ENCODE measurements at regions of chr14 and their contacts with region 1.

Region 1: DNA sequence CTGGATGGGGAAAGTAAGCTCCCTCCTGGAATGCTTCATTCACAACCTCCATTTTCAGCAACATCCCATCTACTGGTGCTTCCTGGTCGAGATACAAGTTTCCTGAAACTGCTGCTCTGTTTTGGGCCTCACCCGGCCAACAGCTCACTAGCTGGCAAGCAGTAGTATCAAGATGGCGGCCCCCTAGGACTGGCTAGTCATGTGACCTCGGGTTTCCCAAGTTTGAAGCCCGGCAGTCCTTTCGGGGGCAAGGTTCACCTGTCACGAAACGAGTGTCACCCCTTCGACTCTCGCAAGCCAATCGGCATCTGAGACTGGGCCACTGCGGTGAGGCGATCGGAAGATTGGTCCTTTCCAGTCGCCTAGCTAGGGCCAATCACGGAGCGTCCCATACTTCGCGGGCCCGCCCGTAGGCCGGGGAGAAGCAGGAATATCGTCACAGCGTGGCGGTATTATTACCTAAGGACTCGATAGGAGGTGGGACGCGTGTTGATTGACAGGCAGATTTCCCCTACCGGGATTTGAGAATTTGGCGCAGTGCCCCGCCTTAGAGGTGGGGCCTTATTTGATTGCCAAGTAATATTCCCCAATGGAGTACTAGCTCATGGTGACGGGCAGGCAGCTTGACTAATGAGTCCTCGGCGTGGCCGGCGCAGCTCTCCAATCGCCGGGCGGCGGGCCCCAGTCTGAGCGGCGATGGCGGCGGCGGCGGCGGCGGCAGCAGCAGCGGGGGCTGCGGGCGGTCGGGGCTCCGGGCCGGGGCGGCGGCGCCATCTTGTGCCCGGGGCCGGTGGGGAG is at the start of gene PABPN1:
- DNase-seq: peak; percentile 95 to 98
- H3K4me3 ChIP-seq: peak within 1 kb of the TSS; percentile 98
- H3K27ac ChIP-seq: peak within 1 kb of the TSS; percentile 68
- H3K4me1 ChIP-seq: peaks cover 15% of the 10 kb centered on the region
- H3K27me3 ChIP-seq: no peaks in the 10 kb centered on the region
- CTCF ChIP-seq: no peak
- total RNA-seq, gene PABPN1: 107 and 142 TPM in 2 replicates

Region 2: DNA sequence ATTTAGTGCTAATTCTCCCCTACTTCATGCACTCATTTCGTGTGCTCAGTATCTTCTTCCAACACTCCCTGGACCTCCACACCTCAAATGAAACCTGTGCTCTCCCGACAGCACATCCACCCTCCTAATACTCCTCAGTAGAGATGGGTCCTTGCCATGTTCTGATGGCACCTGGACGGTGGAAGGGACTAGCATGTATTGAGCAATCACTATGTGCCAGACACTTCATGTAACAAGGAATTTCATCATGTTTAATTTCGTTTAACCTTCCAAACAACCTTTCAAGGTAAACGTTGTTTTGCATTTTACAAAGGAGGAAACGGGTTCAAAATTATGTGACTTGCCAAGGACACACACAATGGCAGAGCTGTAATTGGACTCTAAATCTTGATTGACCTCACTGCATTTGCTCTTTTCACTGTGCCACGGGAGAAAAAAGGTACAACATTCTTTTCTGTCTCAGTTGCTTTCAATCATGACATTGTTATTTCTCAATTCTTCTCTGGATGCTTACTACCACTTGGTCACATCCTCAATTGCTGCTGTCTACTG is 125.3 kb before region 1 on chr14:
- CTCF ChIA-PET with region 1: no interaction called
- POLR2A ChIA-PET with region 1: interaction called, 11 read pairs
- intact Hi-C with region 1: no loop called
- DNase-seq: no peak
- H3K4me3 ChIP-seq: no peak overlapping the region
- H3K27ac ChIP-seq: no peak overlapping the region
- H3K4me1 ChIP-seq: no peaks in the 10 kb centered on the region
- H3K27me3 ChIP-seq: no peaks in the 10 kb centered on the region
- CTCF ChIP-seq: no peak

Region 3: GRCh38 chr14:23306410-23307145 is 14.4 kb before region 1 on chr14 and contains the start of gene BCL2L2:
- CTCF ChIA-PET with region 1: no interaction called
- POLR2A ChIA-PET with region 1: interaction called, 9 read pairs
- intact Hi-C with region 1: loop called (anchors 1 kb)
- DNase-seq: peak; percentile 71 to 84
- H3K4me3 ChIP-seq: peak within 1 kb of the TSS; percentile 84
- H3K27ac ChIP-seq: peak within 1 kb of the TSS; percentile 64
- H3K4me1 ChIP-seq: peaks cover 20% of the 10 kb centered on the region
- H3K27me3 ChIP-seq: no peaks in the 10 kb centered on the region
- CTCF ChIP-seq: no peak
- total RNA-seq, gene BCL2L2: 20.3 and 25.7 TPM in 2 replicates

Region 4: GRCh38 chr14:23469127-23469905 is 148.3 kb after region 1 on chr14 and contains the start of gene NGDN:
- CTCF ChIA-PET with region 1: interaction called, 3 read pairs
- POLR2A ChIA-PET with region 1: no interaction called
- intact Hi-C with region 1: loop called (anchors 5 kb)
- DNase-seq: peak; percentile 82 to 98
- H3K4me3 ChIP-seq: peak within 1 kb of the TSS; percentile 65
- H3K27ac ChIP-seq: peak within 1 kb of the TSS; percentile 35; the same call in 1 of the 2 replicates
- H3K4me1 ChIP-seq: peaks cover 5% of the 10 kb centered on the region
- H3K27me3 ChIP-seq: no peaks in the 10 kb centered on the region
- CTCF ChIP-seq: peak; percentile 73
- total RNA-seq, gene NGDN: 23.1 and 27.6 TPM in 2 replicates

Region 5: DNA sequence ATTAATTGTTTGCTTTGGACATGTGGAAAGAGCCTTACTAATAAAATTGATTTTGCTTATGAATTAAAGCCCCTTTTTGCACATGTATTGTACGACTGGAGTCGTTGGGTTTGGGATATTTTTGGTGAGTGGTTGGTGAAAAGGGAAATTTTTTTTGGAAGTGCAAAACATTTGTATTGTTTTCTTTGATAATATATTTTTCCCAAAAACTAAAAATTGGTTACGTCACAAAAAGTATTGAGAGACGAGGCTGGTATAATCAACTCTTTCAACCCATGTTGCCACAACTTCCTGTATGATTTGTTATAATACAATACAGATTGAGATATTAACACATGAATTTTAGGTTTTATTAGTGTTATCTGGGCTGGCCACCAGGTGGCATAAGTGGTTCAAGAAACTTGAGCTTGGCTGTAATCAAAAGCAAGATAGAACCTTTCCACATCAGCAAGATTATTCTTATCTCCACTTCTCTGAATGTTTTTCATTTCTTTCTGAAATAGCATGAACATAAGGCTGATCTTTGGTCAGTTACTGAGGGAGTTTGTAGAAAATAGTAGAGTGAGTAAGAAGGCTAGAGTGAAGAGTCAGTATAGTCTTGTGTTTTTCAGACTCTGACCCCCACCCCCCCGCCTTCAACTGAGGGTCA is 157.3 kb after region 1 on chr14:
- CTCF ChIA-PET with region 1: interaction called, 3 read pairs
- POLR2A ChIA-PET with region 1: interaction called, 12 read pairs
- intact Hi-C with region 1: no loop called
- DNase-seq: peak in 1 of 2 experiments; percentile 44
- H3K4me3 ChIP-seq: no peak overlapping the region
- H3K27ac ChIP-seq: no peak overlapping the region
- H3K4me1 ChIP-seq: no peaks in the 10 kb centered on the region
- H3K27me3 ChIP-seq: no peaks in the 10 kb centered on the region
- CTCF ChIP-seq: peak; percentile 85

Region 6: GRCh38 chr14:23708343-23708742 is 387.4 kb after region 1 on chr14:
- CTCF ChIA-PET with region 1: interaction called, 10 read pairs
- POLR2A ChIA-PET with region 1: no interaction called
- intact Hi-C with region 1: no loop called
- DNase-seq: no peak
- H3K4me3 ChIP-seq: no peak overlapping the region
- H3K27ac ChIP-seq: no peak overlapping the region
- H3K4me1 ChIP-seq: no peaks in the 10 kb centered on the region
- H3K27me3 ChIP-seq: no peaks in the 10 kb centered on the region
- CTCF ChIP-seq: no peak

Measured in PC-9 (cell line).